A673 (cell line): ENCODE measurements at regions of chrX and their contacts with region 1.

Region 1: DNA sequence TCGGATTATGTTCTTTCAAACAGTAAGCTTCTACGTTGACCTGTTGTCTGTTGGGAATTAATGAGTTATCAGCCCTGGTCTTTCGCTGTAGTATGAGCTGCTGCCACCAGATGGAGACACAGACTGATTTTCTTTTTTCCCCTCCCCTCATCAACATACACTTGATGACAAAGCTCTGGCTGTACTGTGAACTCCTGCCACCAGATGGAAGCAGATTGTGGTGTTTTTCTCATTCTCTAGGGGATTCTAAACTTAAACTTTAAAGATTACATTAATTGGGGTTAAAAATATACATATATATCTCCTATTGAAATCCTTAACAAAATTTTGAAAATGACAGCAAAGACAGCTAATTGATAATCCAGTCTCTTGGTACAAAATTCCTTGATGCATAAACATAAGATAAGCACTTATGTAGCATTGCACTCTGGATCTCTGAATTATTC is 44.8 kb downstream of the SMS start:
- DNase-seq: peak; percentile 86
- H3K4me3 ChIP-seq: no peak overlapping the region
- H3K27ac ChIP-seq: no peak overlapping the region
- H3K4me1 ChIP-seq: no peaks in the 10 kb centered on the region
- H3K27me3 ChIP-seq: no peaks in the 10 kb centered on the region
- CTCF ChIP-seq: peak; percentile 98

Region 2: GRCh38 chrX:22192417-22193060 is 207.2 kb after region 1 on chrX:
- CTCF ChIA-PET with region 1: interaction called, 3 read pairs
- POLR2A ChIA-PET with region 1: no interaction called
- intact Hi-C with region 1: loop called (anchors 5 kb)
- DNase-seq: peak; percentile 63
- H3K4me3 ChIP-seq: no peak overlapping the region
- H3K27ac ChIP-seq: no peak overlapping the region
- H3K4me1 ChIP-seq: no peaks in the 10 kb centered on the region
- H3K27me3 ChIP-seq: no peaks in the 10 kb centered on the region
- CTCF ChIP-seq: peak; percentile 79

Region 3: GRCh38 chrX:22748093-22748999 is 763.0 kb after region 1 on chrX:
- CTCF ChIA-PET with region 1: interaction called, 12 read pairs
- POLR2A ChIA-PET with region 1: no interaction called
- intact Hi-C with region 1: loop called (anchors 2 kb)
- DNase-seq: peak; percentile 61
- H3K4me3 ChIP-seq: no peak overlapping the region
- H3K27ac ChIP-seq: no peak overlapping the region
- H3K4me1 ChIP-seq: no peaks in the 10 kb centered on the region
- H3K27me3 ChIP-seq: no peaks in the 10 kb centered on the region
- CTCF ChIP-seq: peak; percentile 86

Region 4: DNA sequence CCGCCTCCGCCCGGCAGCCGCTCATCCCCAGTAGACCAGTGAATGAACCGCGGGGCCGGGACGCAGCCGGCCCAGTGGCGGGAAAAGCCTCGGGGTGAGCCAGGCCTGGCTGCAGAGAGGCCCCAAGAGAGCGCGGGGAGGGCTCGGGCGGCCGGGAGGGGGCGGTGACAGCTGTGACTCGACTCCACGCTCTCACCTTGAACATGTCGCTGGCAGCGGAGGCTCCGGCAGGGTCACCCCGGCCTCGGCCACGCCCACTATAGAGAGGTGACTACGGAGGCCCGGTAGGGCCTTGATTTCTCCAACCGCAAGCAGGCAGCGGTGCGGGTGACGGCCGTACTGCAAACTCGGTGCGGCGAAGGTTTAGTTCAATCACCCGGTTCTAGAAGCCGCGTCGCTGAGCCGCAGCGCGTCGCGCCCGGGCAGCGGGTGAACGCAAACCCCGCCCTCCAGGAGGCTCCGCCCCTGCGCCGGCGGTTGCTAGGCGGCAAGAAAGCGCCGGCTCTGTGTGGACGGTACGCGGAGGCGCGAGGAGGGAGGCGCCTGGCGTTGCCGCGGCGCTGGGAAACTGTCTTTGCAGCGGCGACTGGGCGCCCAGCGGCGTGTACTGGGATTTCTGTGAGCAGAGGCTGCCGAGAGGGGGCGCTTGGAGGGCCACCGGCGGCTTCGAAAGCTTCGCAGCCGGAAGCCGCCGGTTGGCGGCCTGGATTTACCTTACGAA is 1922.3 kb after region 1 on chrX and contains the starts of genes APOO and CXorf58:
- CTCF ChIA-PET with region 1: no interaction called
- POLR2A ChIA-PET with region 1: no interaction called
- intact Hi-C with region 1: loop called (anchors 5 kb)
- DNase-seq: peak; percentile 94
- H3K4me3 ChIP-seq: peak within 1 kb of the TSS; percentile 74
- H3K27ac ChIP-seq: peak within 1 kb of the TSS; percentile 84
- H3K4me1 ChIP-seq: no peaks in the 10 kb centered on the region
- H3K27me3 ChIP-seq: no peaks in the 10 kb centered on the region
- CTCF ChIP-seq: peak; percentile 75
- total RNA-seq, gene APOO: 74.2 and 79.0 TPM in 2 replicates
- total RNA-seq, gene CXorf58: not detected in 2 replicates